CD8-positive, alpha-beta T cell (primary cell): ENCODE measurements at regions of chr12 and their contacts with region 1.

Region 1: GRCh38 chr12:112978163-112979040 is at the start of gene OAS2:
- DNase-seq: peak; percentile 51 to 95 (median 80)
- ATAC-seq: peak; percentile 92
- H3K4me3 ChIP-seq: peak within 1 kb of the TSS; percentile 63 to 89
- H3K4me3 Mint-ChIP-seq: peak within 1 kb of the TSS; percentile 99
- H3K27ac ChIP-seq: peak within 1 kb of the TSS; percentile 72 to 85
- H3K27ac Mint-ChIP-seq: peak within 1 kb of the TSS; percentile 99
- H3K4me1 ChIP-seq: peaks cover 33% of the 10 kb centered on the region
- H3K4me1 Mint-ChIP-seq: peaks cover 52% of the 10 kb centered on the region
- H3K27me3 ChIP-seq: no peaks in the 10 kb centered on the region
- H3K27me3 Mint-ChIP-seq: no peaks in the 10 kb centered on the region
- CTCF ChIP-seq: no peak
- total RNA-seq, gene OAS2: 9.2 to 10.7 TPM

Region 2: DNA sequence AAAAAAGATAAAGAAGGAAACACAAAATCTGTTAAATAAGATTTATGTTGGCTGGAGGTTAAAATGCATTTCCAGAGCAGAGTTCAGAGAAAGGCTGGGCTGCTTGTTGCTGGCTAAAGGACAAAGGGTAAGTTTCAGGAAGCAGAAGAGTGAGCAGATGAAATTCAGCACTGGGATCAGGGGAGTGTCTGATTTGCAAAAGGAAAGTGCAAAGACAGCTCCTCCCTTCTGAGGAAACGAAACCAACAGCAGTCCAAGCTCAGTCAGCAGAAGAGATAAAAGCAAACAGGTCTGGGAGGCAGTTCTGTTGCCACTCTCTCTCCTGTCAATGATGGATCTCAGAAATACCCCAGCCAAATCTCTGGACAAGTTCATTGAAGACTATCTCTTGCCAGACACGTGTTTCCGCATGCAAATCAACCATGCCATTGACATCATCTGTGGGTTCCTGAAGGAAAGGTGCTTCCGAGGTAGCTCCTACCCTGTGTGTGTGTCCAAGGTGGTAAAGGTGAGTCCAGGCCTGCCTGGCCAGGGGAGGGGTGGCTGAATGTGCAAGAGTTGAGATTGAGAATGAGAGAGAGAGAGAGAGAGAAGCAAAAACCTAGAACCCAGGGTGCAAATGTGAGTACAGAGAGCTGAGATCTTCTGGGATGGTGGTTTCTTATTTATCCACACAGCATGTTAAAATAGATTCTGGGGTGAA is 71.5 kb before region 1 on chr12 and contains the start of gene OAS1:
- CTCF ChIA-PET with region 1: interaction called, 3 read pairs
- POLR2A ChIA-PET with region 1: interaction called, 17 read pairs
- intact Hi-C with region 1: loop called (anchors 5 kb)
- DNase-seq: peak in 6 of 9 experiments; percentile 6 to 68 (median 52)
- ATAC-seq: peak; percentile 77
- H3K4me3 ChIP-seq: peak within 1 kb of the TSS; percentile 61 to 72
- H3K4me3 Mint-ChIP-seq: peak within 1 kb of the TSS; percentile 95
- H3K27ac ChIP-seq: peak within 1 kb of the TSS; percentile 54 to 68
- H3K27ac Mint-ChIP-seq: peak within 1 kb of the TSS; percentile 90
- H3K4me1 ChIP-seq: peaks cover 39% of the 10 kb centered on the region
- H3K4me1 Mint-ChIP-seq: peaks cover 69% of the 10 kb centered on the region
- H3K27me3 ChIP-seq: no peaks in the 10 kb centered on the region
- H3K27me3 Mint-ChIP-seq: no peaks in the 10 kb centered on the region
- CTCF ChIP-seq: no peak
- total RNA-seq, gene OAS1: 1.1 to 1.7 TPM

Region 3: DNA sequence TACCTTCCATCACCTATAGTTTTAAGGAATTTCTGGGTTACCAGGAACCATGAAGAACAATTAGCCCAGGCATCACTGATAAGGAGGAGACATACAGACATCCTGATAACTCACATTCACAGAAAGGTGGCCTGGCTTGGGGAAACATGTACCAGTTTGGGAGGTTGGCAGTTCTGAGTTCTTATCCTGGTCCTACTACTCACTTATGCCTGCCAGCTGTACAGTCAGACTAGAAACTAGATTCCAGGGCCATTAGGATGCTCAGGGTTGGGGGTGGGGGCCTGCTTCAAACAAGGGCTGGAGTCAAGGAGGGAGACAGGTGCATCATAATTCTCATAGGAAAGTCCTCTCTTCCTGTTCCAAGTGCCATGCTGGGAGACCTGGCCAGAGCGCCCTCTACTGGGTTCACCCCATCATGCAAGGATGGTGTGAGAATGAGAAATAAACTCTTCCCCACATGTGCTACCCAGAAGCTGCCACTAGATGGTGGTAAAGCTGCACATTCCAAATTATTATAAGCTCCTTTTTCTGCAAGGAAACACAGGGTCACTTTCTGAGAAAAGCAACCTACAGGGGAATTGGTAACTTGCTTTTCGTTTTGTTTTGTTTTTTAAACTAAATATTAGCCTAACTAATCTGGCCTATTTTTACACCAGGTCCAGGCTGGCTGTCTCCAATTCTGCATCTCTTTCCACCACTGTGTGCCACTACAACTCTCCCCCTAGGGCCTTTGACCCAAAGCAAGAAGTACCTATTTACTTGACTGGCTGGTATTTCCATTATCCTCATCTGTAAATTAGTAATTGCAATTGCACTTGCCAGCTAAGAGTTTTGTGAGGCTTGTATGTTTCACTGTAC is 14.4 kb after region 1 on chr12:
- CTCF ChIA-PET with region 1: interaction called, 30 read pairs
- POLR2A ChIA-PET with region 1: interaction called, 26 read pairs
- intact Hi-C with region 1: loop called in 1 of 2 experiments (anchors 1 kb)
- DNase-seq: peak; percentile 25 to 70 (median 46)
- ATAC-seq: peak; percentile 79
- H3K4me3 ChIP-seq: no peak overlapping the region
- H3K4me3 Mint-ChIP-seq: no peak overlapping the region
- H3K27ac ChIP-seq: no peak overlapping the region
- H3K27ac Mint-ChIP-seq: no peak overlapping the region
- H3K4me1 ChIP-seq: peaks cover 9% of the 10 kb centered on the region
- H3K4me1 Mint-ChIP-seq: peaks cover 11% of the 10 kb centered on the region
- H3K27me3 ChIP-seq: no peaks in the 10 kb centered on the region
- H3K27me3 Mint-ChIP-seq: no peaks in the 10 kb centered on the region
- CTCF ChIP-seq: peak; percentile 74

Region 4: GRCh38 chr12:113334786-113335540 is 356.6 kb after region 1 on chr12 and contains the start of gene SLC8B1:
- CTCF ChIA-PET with region 1: no interaction called
- POLR2A ChIA-PET with region 1: no interaction called
- intact Hi-C with region 1: loop called in 1 of 2 experiments (anchors 5 kb)
- DNase-seq: peak; percentile 74 to 95 (median 86)
- ATAC-seq: peak; percentile 99
- H3K4me3 ChIP-seq: peak within 1 kb of the TSS; percentile 80 to 89
- H3K4me3 Mint-ChIP-seq: peak within 1 kb of the TSS; percentile 92
- H3K27ac ChIP-seq: peak within 1 kb of the TSS; percentile 31 to 51
- H3K27ac Mint-ChIP-seq: peak within 1 kb of the TSS; percentile 88
- H3K4me1 ChIP-seq: peaks cover 17% of the 10 kb centered on the region
- H3K4me1 Mint-ChIP-seq: peaks cover 41% of the 10 kb centered on the region
- H3K27me3 ChIP-seq: no peaks in the 10 kb centered on the region
- H3K27me3 Mint-ChIP-seq: no peaks in the 10 kb centered on the region
- CTCF ChIP-seq: no peak
- total RNA-seq, gene SLC8B1: 67.3 to 72.8 TPM